IMR-90 (cell line): ENCODE measurements at regions of chr17 and their contacts with region 1.

Region 1: DNA sequence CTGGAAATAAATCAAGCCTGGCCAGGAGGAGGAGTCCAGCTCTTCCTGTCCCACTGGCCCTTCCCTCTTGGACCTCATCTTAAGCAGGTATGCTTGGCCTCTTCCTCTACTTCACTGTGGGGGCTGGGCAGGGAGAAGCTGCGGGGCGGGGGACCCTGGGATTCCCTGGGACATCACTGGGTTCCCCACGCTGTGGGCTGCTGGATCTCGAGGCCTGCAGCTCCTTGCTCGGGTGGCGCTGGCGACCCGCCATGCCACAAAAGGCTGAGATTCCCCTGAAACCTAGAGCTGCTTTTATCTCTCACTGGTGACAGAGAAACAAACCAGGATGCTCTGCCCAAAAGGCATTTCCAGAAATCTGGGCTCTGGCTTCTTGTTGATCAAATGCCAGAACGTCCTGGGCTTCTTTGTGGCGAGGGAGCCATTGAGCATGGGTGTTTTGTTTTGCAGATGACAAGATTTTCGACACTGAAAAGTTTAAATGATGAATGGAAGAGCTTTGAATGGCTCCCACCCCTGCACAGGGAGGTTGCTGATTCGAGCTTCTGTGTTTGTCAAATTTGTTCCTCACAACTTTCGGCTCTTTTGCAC is 8.6 kb upstream of the PGS1 start:
- DNase-seq: no peak
- ATAC-seq: no peak
- H3K4me3 ChIP-seq: no peak overlapping the region
- H3K27ac ChIP-seq: no peak overlapping the region
- H3K4me1 ChIP-seq: peaks cover 23% of the 10 kb centered on the region
- H3K27me3 ChIP-seq: no peaks in the 10 kb centered on the region
- CTCF ChIP-seq: no peak
- POLR2A ChIP-seq: no peak
- RAD21 ChIP-seq: no peak

Region 2: GRCh38 chr17:78307872-78308638 is 61.8 kb before region 1 on chr17:
- CTCF ChIA-PET with region 1: no interaction called
- POLR2A ChIA-PET with region 1: interaction called, 14 read pairs
- dilution Hi-C with region 1: no loop called
- in situ Hi-C with region 1: no loop called
- intact Hi-C with region 1: no loop called
- DNase-seq: no peak
- ATAC-seq: peak; percentile 22; the same call in 1 of the 2 replicates
- H3K4me3 ChIP-seq: no peak overlapping the region
- H3K27ac ChIP-seq: no peak overlapping the region
- H3K4me1 ChIP-seq: no peaks in the 10 kb centered on the region
- H3K27me3 ChIP-seq: no peaks in the 10 kb centered on the region
- CTCF ChIP-seq: no peak
- POLR2A ChIP-seq: no peak
- RAD21 ChIP-seq: no peak

Region 3: GRCh38 chr17:78353834-78354233 is 16.1 kb before region 1 on chr17:
- CTCF ChIA-PET with region 1: no interaction called
- POLR2A ChIA-PET with region 1: no interaction called
- dilution Hi-C with region 1: no loop called
- in situ Hi-C with region 1: no loop called
- intact Hi-C with region 1: no loop called
- DNase-seq: no peak
- ATAC-seq: no peak
- H3K4me3 ChIP-seq: no peak overlapping the region
- H3K27ac ChIP-seq: peak overlapping the region; percentile 97
- H3K4me1 ChIP-seq: peaks cover 31% of the 10 kb centered on the region
- H3K27me3 ChIP-seq: no peaks in the 10 kb centered on the region
- CTCF ChIP-seq: no peak
- POLR2A ChIP-seq: no peak
- RAD21 ChIP-seq: no peak